ENCODE measurements at regions of chr19 and their contacts with region 1.

Region 1: GRCh38 chr19:27974082-27974513 is 1238.9 kb downstream of the UQCRFS1 start:
- DNase-seq: peak in 1 of 3 donors; percentile 46
- ATAC-seq: peak; percentile 51 to 54
- H3K4me3 ChIP-seq: no peak overlapping the region
- H3K27ac ChIP-seq: no peak overlapping the region
- H3K4me1 ChIP-seq: no peaks in the 10 kb centered on the region
- H3K27me3 ChIP-seq: no peaks in the 10 kb centered on the region

Region 2: GRCh38 chr19:28324275-28325060 is 350.4 kb after region 1 on chr19:
- intact Hi-C with region 1: loop called (anchors 5 to 10 kb)
- DNase-seq: no peak
- ATAC-seq: no peak
- H3K4me3 ChIP-seq: no peak overlapping the region
- H3K27ac ChIP-seq: no peak overlapping the region
- H3K4me1 ChIP-seq: no peaks in the 10 kb centered on the region
- H3K27me3 ChIP-seq: no peaks in the 10 kb centered on the region

Measured in right cardiac atrium (tissue), 5 donors.